Naive thymus-derived CD4-positive, alpha-beta T cell (primary cell): ENCODE measurements at regions of chr10 and their contacts with region 1.

Region 1: DNA sequence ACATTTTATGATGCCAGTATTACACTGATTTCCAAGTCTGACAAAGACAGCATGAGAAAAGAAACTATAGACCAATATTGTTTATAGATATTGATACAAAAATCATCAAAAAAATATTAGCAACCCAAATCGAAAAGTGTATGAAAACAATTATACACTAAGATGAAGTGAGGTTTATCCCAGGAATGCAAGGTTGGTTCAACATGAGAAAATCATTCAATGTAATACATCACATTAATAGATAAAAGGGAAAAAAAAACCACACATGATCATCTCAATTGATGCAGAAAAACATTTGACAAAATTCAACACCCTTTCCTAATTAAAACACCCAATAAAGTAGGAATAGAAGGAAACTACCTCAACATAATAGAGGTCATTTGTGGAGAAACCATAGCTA is 153.9 kb downstream of the DNAJC1 start:
- DNase-seq: peak in 1 of 9 donors; percentile 5
- ATAC-seq: no peak
- H3K4me3 ChIP-seq: no peak overlapping the region
- H3K4me3 Mint-ChIP-seq: no peak overlapping the region
- H3K27ac ChIP-seq: no peak overlapping the region
- H3K27ac Mint-ChIP-seq: no peak overlapping the region
- H3K4me1 ChIP-seq: no peaks in the 10 kb centered on the region
- H3K4me1 Mint-ChIP-seq: peaks cover 0 to 3% (median 0%) of the 10 kb centered on the region in 7 donors
- H3K27me3 ChIP-seq: no peaks in the 10 kb centered on the region
- H3K27me3 Mint-ChIP-seq: no peaks in the 10 kb centered on the region

Region 2: GRCh38 chr10:21217107-21217506 is 632.5 kb before region 1 on chr10:
- CTCF ChIA-PET with region 1: no interaction called
- POLR2A ChIA-PET with region 1: no interaction called
- intact Hi-C with region 1: loop called in 1 of 2 experiments (anchors 10 kb)
- DNase-seq: no peak
- ATAC-seq: no peak
- H3K4me3 ChIP-seq: no peak overlapping the region
- H3K4me3 Mint-ChIP-seq: no peak overlapping the region
- H3K27ac ChIP-seq: no peak overlapping the region
- H3K27ac Mint-ChIP-seq: no peak overlapping the region
- H3K4me1 ChIP-seq: no peaks in the 10 kb centered on the region
- H3K4me1 Mint-ChIP-seq: no peaks in the 10 kb centered on the region
- H3K27me3 ChIP-seq: no peaks in the 10 kb centered on the region
- H3K27me3 Mint-ChIP-seq: peaks cover 0 to 5% (median 0%) of the 10 kb centered on the region in 5 donors

Region 3: DNA sequence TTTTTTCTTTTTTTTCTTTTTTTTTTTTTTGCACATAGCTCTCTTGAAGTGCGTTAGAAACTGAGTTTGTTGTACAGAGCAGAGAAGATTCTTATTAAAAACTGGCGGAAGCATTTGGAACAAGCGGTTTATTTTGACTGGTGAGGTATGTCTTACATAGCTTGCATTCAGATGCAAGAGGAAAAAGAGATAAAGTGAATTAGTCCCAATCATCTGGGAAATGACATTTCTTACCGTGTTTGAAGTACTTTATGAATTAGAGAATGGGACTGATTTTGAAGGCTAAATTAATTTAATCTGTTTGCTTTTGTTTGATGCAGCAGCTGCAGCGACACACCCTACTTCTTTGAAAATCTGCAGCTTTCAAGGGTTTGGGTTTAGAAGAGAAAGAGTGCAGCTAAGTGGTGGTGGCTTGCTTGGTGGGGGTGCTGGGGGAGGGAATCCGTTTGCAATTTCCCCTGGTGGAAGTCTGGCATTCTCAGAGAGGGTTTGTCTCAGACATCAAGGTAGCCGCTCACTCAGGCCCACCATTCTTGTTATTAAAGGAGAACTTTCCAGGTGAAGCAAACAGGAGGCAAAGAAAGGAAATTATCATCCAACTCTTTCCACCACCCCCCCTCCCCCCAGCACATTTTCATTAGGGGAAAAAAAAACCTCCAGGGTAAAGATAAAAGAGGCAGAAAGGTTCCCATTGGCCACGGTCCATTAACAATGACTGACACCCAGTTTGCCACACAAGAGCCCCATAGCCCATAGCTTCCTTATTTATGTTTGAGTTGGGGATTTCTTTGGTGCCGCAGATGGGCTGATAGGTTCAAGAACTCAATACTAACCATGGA is 555.9 kb before region 1 on chr10:
- CTCF ChIA-PET with region 1: no interaction called
- POLR2A ChIA-PET with region 1: no interaction called
- intact Hi-C with region 1: no loop called
- DNase-seq: no peak
- ATAC-seq: no peak
- H3K4me3 ChIP-seq: no peak overlapping the region
- H3K4me3 Mint-ChIP-seq: peak overlapping the region in 1 of 10 donors; percentile 60
- H3K27ac ChIP-seq: no peak overlapping the region
- H3K27ac Mint-ChIP-seq: no peak overlapping the region
- H3K4me1 ChIP-seq: no peaks in the 10 kb centered on the region
- H3K4me1 Mint-ChIP-seq: peaks cover 0 to 13% (median 4%) of the 10 kb centered on the region in 7 donors
- H3K27me3 ChIP-seq: no peaks in the 10 kb centered on the region
- H3K27me3 Mint-ChIP-seq: peaks cover 13 to 40% (median 23%) of the 10 kb centered on the region in 5 donors

Region 4: DNA sequence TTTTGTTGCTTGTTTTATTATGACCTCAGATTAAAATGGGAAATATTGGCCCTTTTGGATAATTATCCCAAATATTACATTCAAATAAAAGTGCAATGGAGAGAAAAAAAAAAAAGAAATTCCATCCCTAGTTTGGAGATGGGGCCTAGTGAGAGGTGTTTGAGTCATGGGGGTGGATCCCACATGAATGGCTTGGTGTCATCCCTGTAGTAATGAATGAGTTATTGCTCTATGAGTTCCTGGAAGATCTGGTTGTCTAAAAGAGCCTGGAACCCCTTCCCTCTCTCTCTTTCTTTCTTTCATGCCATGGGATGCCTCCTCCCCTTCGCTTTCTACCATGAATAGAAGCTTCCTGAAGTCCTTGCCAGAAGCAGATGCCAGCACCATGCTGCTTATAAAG is 1290.1 kb after region 1 on chr10:
- CTCF ChIA-PET with region 1: no interaction called
- POLR2A ChIA-PET with region 1: no interaction called
- intact Hi-C with region 1: no loop called
- DNase-seq: no peak
- ATAC-seq: no peak
- H3K4me3 ChIP-seq: no peak overlapping the region
- H3K4me3 Mint-ChIP-seq: no peak overlapping the region
- H3K27ac ChIP-seq: no peak overlapping the region
- H3K27ac Mint-ChIP-seq: no peak overlapping the region
- H3K4me1 ChIP-seq: no peaks in the 10 kb centered on the region
- H3K4me1 Mint-ChIP-seq: no peaks in the 10 kb centered on the region
- H3K27me3 ChIP-seq: no peaks in the 10 kb centered on the region
- H3K27me3 Mint-ChIP-seq: peaks cover 0 to 15% (median 8%) of the 10 kb centered on the region in 5 donors